ENCODE measurements at regions of chr9 and their contacts with region 1.

Region 1: DNA sequence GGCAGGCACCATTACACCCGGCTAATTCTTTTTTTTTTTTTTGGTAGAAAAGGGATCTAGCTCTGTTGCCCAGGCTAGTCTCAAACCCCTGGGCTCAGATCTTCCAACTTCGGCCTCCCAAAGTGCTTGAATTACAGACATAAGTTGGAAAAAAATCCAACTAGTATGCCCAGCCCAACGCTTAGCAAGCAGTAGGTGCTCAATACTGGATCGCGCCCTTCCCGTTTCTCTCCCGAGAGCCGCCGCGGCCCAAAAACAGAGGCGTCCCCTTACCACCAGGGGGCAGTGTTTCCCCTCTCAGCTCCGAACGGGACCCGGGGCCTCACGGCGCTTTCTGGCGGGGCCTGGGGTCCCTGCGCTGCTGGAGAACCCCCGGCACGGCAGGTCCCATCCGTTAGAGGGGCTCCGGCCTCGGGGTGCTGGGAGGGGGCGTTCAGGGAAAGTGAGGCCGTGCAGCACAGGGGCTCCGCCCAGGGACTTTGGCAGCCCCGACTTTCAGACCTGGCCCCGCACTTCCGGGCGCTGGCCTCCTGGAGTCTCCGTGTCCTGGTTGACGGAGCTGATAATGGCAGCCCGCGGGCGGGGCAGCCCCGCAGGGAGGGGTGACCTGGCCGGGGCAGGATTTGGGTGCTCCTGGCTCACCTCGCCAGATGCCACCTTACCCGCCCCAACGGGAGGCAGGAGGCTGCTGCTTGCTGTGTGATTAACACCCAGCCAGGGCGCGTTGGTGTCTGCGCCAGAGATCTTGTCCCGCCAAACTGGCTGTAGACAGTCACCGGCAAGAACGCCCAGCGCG is 15.2 kb downstream of the PTGES start:
- DNase-seq: peak; percentile 90
- H3K4me3 Mint-ChIP-seq: peak overlapping the region; percentile 65
- H3K27ac Mint-ChIP-seq: peak overlapping the region; percentile 80
- H3K4me1 Mint-ChIP-seq: peaks cover 16% of the 10 kb centered on the region
- H3K27me3 Mint-ChIP-seq: peaks cover 44% of the 10 kb centered on the region

Region 2: DNA sequence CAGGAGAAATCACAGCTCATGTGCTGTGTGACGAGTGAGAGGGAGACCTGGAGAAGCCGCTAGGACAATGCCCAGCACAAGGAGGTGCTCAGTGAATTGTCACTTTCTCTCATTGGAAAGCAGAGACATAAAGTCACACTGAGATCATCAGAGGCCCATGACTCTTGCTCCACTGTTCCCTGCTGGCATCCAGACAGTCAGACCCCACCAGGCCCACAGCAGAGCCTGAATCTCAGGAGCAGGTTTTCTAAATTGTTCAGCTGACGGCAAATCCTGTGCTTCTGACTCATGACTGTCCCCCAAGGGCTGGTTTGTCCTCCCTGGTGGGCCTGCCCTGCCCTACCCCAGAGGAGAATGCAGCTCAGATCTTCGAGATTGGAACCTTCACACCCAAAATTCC is 12.3 kb after region 1 on chr9:
- CTCF ChIA-PET with region 1: interaction called, 12 read pairs
- DNase-seq: no peak
- H3K4me3 Mint-ChIP-seq: no peak overlapping the region
- H3K27ac Mint-ChIP-seq: no peak overlapping the region
- H3K4me1 Mint-ChIP-seq: peaks cover 11% of the 10 kb centered on the region
- H3K27me3 Mint-ChIP-seq: peaks cover 58% of the 10 kb centered on the region

Region 3: DNA sequence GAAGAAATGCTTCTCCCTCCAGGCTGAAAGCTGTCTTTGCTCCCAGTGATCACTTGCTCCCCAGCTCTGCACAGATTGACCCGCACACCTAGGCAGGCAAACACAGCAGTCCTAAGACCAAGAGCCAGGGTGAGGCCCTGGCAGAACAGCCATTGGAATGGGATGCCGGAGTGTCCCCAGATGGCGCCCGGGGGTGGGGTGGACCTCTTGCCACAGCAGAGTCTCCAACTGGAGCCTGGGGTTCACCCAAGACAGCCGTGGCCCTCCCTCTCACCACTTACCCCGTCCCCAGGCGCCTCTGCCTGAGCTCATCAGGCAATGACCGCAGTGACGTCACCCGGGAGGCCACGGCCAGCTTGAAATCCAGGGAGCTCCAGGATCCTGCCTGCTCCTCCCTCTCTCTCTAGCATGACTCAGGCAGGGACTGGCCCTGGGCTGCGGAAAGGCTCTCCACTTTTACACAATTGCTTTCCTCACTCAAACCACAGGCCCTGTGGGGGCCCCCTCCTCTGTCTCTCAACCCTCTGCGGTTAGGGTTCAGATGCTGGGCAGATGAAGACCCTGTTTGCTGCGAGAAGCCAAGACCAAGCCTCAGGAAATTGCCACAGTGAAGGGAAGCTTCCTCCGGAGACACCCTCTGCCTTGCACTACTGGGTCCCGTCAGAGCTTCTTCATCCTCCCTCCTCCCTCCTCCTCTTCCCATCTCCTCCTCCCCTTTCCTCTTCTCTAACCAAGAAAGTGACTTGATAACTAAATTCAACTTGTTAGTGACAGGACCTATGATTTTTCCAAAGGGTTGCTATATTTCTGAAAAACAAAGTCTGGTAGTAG is 39.5 kb after region 1 on chr9:
- CTCF ChIA-PET with region 1: interaction called, 87 read pairs
- DNase-seq: peak; percentile 55
- H3K4me3 Mint-ChIP-seq: no peak overlapping the region
- H3K27ac Mint-ChIP-seq: no peak overlapping the region
- H3K4me1 Mint-ChIP-seq: peaks cover 13% of the 10 kb centered on the region
- H3K27me3 Mint-ChIP-seq: peaks cover 60% of the 10 kb centered on the region

Region 4: DNA sequence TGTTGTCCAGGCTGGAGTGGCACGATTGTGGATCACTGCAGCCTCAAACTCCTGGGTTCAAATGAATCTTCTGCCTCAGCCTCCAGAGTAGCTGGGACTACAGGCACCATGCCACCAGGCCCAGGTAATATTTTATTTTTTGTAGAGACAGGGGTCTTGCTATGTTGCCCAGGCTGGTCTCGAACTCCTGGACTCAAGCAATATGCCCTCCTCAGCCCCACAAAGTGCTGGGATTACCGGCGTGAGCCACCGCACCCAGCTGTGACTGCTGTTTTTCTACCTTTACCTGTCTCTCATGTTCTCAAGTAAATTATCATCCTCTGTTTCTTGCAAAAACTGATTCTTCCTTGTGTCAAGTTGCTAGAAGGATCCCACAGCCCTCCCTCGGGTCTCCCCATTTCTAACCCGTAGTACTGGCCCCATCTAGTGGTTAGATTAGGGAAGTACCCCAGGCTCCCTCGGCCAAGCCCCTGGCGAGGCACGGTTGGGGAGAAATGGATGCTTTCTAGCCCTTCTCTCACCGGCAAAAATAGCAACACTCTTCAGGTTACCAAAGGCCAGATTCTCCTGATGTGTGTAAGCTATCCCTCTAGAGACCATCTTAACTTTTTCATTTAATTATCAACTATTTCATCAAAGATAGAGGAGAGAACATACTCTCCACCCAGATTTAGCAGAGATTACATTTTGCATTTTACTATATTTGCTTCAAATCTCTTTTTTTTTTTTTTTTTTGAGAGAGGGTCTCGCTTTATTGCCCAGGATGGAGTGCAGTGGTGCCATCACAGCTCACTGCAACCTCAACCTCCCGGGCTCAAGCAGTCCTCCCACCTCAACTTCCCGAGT is 46.1 kb after region 1 on chr9:
- CTCF ChIA-PET with region 1: interaction called, 87 read pairs
- DNase-seq: peak; percentile 82
- H3K4me3 Mint-ChIP-seq: no peak overlapping the region
- H3K27ac Mint-ChIP-seq: no peak overlapping the region
- H3K4me1 Mint-ChIP-seq: peaks cover 3% of the 10 kb centered on the region
- H3K27me3 Mint-ChIP-seq: peaks cover 59% of the 10 kb centered on the region

Region 5: DNA sequence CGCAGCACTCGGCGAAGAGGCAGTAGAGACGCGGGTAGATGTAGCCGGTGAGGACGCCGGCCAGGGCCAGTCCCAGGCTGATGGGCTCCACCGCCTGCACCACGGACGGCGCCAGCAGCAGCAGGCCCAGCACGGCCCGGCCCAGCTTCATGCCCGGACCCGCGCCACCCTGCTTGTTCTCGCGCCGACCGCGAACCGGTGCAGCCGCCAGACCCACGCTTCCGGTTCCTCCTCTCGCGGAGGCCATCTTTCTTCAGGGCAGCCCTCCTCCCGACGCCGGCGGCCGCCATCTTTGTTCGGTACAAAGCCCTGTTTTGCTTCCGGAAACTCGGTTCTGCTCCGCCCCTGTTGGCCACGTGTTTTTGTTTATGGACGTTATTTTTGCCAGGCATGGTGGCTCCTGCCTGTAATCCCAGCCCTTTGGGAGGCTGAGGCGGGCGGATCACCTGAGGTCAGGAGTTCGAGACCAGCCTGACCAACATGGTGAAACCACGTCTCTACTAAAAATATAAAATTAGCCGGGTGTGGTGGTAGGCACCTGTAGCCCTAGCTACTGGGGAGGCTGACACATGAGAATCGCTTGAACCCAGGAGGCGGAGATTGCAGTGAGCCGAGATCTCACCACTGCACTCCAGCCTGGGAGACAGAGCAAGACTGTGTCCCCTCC is 86.4 kb after region 1 on chr9 and contains the start of gene TOR1A:
- CTCF ChIA-PET with region 1: no interaction called
- DNase-seq: peak; percentile 96
- H3K4me3 Mint-ChIP-seq: peak within 1 kb of the TSS; percentile 79
- H3K27ac Mint-ChIP-seq: peak within 1 kb of the TSS; percentile 87
- H3K4me1 Mint-ChIP-seq: peaks cover 19% of the 10 kb centered on the region
- H3K27me3 Mint-ChIP-seq: no peaks in the 10 kb centered on the region